OCI-LY7 (cell line): ENCODE measurements at regions of chr6 and their contacts with region 1.

Region 1: DNA sequence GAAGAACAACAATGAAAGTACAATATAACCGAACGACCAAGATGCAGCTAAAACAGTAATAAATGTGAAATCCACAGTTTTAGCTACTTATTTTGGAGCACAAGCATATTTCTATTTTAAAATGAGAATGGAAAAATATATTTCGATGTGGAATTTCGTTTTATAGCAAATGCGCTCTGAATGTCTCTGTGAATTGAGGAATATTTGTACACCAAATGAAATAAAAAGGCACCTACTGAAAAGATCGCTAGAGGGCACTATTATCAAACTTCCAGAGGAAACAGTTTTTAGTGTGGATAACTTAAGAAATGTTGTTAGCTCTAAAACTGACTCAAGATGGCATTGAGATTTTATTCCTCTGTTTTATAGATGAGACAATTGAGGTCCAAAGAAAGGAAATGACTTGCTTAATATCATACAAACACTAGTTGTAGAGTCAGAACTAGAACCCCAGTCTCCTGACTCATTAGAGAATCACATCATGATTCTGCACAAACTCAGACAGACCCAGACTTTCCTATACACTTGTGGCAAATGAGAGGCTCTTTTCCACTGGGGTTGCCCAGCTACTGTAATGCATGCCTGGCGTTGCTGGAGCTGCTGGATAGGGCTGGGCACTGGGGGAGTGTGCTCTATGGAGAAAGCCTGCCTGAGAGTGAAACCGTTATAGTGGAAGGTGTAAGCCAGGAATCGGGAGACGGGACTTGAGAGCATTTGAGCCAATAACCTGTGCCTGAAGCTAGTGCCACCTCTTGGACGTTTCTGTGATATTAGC is 51.9 kb downstream of the GCLC start:
- DNase-seq: peak; percentile 61
- H3K4me3 ChIP-seq: no peak overlapping the region
- H3K27ac ChIP-seq: no peak overlapping the region
- H3K4me1 ChIP-seq: no peaks in the 10 kb centered on the region
- CTCF ChIP-seq: peak; percentile 94

Region 2: DNA sequence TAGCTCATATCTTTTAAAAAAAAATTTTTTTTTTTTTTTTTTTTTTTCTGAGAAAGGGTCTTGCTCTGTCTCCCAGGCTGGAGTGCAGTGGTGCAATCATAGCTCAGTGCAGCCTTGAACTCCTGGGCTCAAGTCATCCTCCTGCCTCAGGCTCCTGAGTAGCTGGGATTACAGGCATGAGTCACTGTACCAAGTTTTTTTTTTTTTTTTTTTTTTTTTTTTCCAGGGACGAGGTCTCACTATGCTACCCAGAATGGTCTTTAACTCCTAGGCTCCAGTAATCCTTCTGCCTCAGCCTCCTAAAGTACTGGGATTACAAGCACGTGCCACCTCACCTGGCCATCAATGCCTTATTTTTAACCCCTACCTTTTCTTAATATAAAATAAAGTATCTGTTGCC is 24.0 kb after region 1 on chr6:
- CTCF ChIA-PET with region 1: no interaction called
- POLR2A ChIA-PET with region 1: interaction called, 12 read pairs
- intact Hi-C with region 1: no loop called
- DNase-seq: no peak
- H3K4me3 ChIP-seq: no peak overlapping the region
- H3K27ac ChIP-seq: no peak overlapping the region
- H3K4me1 ChIP-seq: no peaks in the 10 kb centered on the region
- CTCF ChIP-seq: no peak

Region 3: DNA sequence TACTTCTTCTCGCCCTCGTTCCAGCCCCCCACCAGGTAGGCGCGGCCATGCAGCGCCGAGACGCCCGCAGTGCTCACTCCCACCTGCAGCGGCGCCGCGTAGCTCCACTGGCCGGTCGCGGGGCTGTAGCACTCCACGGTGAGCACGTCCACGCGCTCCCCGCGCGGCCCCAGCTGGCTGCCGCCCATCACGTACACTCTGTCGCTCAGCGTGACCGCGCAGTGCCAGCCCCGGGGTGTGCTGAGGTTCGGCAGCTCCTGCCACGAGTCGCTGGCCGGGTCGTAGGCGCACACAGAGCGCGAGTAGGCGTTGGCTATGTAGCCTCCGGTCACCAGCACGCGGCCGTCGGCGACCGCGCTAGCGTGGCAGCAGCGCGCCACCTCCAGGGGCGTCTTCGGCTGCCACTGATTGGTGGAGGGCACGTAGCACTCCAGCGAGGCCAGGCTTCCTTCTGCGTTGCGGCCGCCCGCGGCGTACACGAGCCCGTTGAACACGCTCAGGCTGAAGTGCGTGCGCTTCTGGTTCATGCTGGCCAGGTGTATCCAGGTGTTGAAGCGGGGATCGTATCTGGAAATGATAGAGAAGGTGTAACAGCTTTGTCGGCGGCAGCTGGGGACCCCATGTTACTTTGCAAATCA is 158.8 kb after region 1 on chr6:
- CTCF ChIA-PET with region 1: interaction called, 3 read pairs
- POLR2A ChIA-PET with region 1: interaction called, 3 read pairs
- intact Hi-C with region 1: loop called (anchors 1 kb)
- DNase-seq: no peak
- H3K4me3 ChIP-seq: peak overlapping the region; percentile 50
- H3K27ac ChIP-seq: no peak overlapping the region
- H3K4me1 ChIP-seq: peaks cover 13% of the 10 kb centered on the region
- CTCF ChIP-seq: no peak

Region 4: GRCh38 chr6:53725791-53726431 is 232.9 kb after region 1 on chr6:
- CTCF ChIA-PET with region 1: interaction called, 6 read pairs
- POLR2A ChIA-PET with region 1: no interaction called
- intact Hi-C with region 1: loop called (anchors 1 kb)
- DNase-seq: peak; percentile 70
- H3K4me3 ChIP-seq: no peak overlapping the region
- H3K27ac ChIP-seq: no peak overlapping the region
- H3K4me1 ChIP-seq: no peaks in the 10 kb centered on the region
- CTCF ChIP-seq: peak; percentile 89

Region 5: DNA sequence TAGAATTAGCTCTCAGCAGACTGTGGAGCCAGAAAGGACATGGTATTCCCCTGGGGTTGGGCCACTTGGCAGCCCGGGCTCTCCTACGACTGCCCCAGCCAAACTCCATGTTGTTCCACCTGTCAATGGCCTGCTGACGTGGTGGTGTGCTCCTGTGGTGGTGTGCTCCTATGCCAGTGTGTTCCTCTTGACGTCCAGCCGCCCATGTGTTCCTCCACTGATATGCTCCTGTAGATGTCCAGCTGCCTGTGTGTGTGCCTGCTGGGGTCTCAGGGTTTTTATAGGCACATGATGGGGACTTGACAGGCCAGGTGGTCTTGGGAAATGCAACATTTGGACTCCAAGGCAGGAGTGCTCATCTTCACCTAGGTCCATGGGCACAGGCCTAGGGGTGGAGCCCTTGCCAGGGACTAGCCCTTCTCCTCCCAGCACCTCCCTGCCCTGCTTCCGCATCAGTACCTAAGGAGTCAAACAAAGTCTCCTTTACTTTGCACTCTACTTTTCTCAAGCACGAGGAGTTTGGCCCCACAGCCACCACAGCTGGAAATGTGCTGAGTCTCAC is 948.7 kb after region 1 on chr6:
- CTCF ChIA-PET with region 1: no interaction called
- POLR2A ChIA-PET with region 1: no interaction called
- intact Hi-C with region 1: no loop called
- DNase-seq: no peak
- H3K4me3 ChIP-seq: no peak overlapping the region
- H3K27ac ChIP-seq: no peak overlapping the region
- H3K4me1 ChIP-seq: no peaks in the 10 kb centered on the region
- CTCF ChIP-seq: no peak